WTC11 (cell line): ENCODE measurements at regions of chr20 and their contacts with region 1.

Region 1: DNA sequence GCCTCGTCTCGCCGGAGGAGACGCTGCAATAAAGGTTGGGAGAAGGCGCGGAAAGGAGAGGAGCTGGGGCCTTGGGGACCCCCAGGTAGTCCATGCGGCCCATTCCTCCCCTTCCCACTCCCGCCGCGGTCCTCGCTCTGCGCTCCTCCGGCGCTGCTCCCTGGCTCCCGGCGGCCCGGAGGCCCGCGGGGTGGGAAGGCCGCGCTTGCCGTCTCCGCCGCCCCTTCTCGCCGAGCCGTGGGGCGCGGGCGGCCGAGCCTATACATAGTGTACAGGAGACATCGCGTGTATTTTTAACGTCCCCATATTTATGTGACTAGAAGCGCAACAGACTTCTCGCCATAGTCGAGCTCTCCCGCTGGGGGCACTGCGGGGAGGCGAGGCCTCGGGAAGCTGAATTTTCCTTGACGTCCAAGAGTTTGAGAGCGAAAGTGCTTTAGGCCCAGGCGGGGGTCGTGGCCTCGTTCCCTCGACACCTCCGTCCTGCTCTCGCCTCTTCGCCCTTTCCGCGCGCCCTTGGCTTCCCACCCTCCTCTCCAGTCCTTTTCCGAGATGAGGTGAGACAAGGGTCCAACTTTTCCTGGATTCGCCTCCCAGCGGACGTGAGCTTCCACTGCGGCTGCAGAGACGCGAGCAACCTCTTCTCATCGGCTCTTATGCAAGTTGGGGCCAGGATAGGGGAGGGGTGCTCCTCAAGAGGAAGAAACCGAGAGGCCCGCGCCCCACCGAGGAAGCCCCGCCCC is 29.0 kb downstream of the SLC12A5 start:
- DNase-seq: peak; percentile 79
- ATAC-seq: peak; percentile 68
- H3K4me3 Mint-ChIP-seq: peak overlapping the region; percentile 71
- H3K27ac Mint-ChIP-seq: no peak overlapping the region
- H3K4me1 Mint-ChIP-seq: peaks cover 30% of the 10 kb centered on the region
- H3K27me3 Mint-ChIP-seq: peaks cover 68% of the 10 kb centered on the region
- CTCF ChIP-seq: no peak

Region 2: DNA sequence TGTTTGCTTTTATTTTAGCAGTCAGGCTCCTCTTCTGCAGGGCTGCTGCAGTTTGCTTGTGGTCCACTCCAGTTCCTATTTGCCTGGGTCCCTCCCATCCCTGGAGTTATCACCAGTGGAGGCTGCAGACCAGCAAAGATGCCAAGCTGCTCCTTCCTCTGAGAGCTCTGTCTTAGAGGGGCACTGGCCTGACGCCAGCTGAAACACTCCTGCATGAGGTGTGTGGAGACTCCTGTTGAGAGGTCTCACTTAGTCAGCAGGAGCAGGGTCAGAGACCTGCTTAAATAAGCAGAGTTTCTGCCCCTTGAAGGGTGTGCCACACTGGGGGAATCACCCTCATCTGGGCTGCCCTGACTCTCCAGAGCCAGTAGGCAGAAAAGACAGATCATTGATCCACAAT is 462.8 kb before region 1 on chr20:
- CTCF ChIA-PET with region 1: no interaction called
- POLR2A ChIA-PET with region 1: no interaction called
- DNase-seq: no peak
- ATAC-seq: no peak
- H3K4me3 Mint-ChIP-seq: no peak overlapping the region
- H3K27ac Mint-ChIP-seq: no peak overlapping the region
- H3K4me1 Mint-ChIP-seq: peaks cover 6% of the 10 kb centered on the region
- H3K27me3 Mint-ChIP-seq: no peaks in the 10 kb centered on the region; the same call in 1 of the 2 replicates
- CTCF ChIP-seq: no peak

Region 3: DNA sequence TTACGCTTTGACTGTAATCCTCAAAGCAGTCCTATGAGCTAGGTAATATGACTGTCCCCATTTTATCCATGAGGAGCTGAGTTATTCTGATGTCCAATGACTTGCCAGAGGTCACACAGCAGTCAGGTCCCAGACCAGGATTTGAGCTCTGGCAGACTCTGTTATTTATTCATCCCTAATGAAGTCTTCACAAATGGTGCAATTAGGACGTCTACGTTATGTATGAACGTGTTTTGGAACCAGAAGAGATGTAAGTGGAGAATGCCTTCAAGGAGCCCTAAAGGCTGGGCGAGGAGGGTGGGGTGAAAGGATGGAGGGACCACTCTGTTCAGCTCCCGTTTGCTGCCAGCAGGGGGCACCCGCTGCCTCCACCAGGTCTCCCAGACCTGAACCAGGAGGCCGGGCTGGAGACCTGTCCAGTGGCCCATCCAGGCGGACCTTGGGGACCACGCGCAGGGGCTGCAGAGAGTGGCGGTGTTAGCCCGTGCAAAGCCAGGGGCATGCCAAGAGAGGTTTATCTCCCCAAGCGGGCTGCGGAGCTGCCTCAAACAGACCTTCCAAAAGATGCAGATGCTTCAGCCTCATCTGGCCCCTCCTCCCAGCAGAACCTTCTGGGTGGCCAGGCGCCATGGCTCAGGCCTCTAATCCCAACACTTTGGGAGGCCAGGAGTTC is 70.8 kb before region 1 on chr20:
- CTCF ChIA-PET with region 1: interaction called, 29 read pairs
- POLR2A ChIA-PET with region 1: no interaction called
- DNase-seq: peak; percentile 93
- ATAC-seq: peak; percentile 91
- H3K4me3 Mint-ChIP-seq: no peak overlapping the region
- H3K27ac Mint-ChIP-seq: no peak overlapping the region
- H3K4me1 Mint-ChIP-seq: peaks cover 14% of the 10 kb centered on the region
- H3K27me3 Mint-ChIP-seq: peaks cover 6% of the 10 kb centered on the region
- CTCF ChIP-seq: peak; percentile 93

Region 4: GRCh38 chr20:46022411-46023147 is 35.4 kb before region 1 on chr20:
- CTCF ChIA-PET with region 1: interaction called, 108 read pairs
- POLR2A ChIA-PET with region 1: no interaction called
- DNase-seq: peak; percentile 87
- ATAC-seq: peak; percentile 7; the same call in 1 of the 2 replicates
- H3K4me3 Mint-ChIP-seq: peak overlapping the region; percentile 76
- H3K27ac Mint-ChIP-seq: peak overlapping the region; percentile 28; the same call in 1 of the 2 replicates
- H3K4me1 Mint-ChIP-seq: peaks cover 7% of the 10 kb centered on the region
- H3K27me3 Mint-ChIP-seq: peaks cover 50% of the 10 kb centered on the region
- CTCF ChIP-seq: peak; percentile 79

Region 5: DNA sequence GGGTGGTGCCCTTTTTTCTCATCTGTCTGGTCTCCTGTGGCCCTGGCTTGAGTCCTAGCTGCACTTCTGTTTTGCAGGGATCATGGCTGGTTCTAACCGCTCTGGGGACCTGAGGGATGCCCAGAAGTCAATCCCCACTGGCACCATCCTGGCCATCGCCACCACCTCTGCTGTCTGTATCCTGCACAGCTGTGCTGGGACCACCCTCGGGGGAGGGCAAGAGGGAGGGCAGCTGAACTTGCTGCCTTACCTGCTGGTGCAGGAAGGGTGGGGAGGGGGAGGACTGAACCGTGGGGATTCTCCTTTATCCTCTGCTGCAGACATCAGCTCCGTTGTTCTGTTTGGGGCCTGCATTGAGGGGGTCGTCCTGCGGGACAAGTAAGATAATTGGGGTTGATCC is 14.5 kb before region 1 on chr20:
- CTCF ChIA-PET with region 1: interaction called, 12 read pairs
- POLR2A ChIA-PET with region 1: interaction called, 3 read pairs
- DNase-seq: no peak
- ATAC-seq: no peak
- H3K4me3 Mint-ChIP-seq: no peak overlapping the region
- H3K27ac Mint-ChIP-seq: no peak overlapping the region
- H3K4me1 Mint-ChIP-seq: no peaks in the 10 kb centered on the region
- H3K27me3 Mint-ChIP-seq: peaks cover 34% of the 10 kb centered on the region
- CTCF ChIP-seq: no peak

Region 6: DNA sequence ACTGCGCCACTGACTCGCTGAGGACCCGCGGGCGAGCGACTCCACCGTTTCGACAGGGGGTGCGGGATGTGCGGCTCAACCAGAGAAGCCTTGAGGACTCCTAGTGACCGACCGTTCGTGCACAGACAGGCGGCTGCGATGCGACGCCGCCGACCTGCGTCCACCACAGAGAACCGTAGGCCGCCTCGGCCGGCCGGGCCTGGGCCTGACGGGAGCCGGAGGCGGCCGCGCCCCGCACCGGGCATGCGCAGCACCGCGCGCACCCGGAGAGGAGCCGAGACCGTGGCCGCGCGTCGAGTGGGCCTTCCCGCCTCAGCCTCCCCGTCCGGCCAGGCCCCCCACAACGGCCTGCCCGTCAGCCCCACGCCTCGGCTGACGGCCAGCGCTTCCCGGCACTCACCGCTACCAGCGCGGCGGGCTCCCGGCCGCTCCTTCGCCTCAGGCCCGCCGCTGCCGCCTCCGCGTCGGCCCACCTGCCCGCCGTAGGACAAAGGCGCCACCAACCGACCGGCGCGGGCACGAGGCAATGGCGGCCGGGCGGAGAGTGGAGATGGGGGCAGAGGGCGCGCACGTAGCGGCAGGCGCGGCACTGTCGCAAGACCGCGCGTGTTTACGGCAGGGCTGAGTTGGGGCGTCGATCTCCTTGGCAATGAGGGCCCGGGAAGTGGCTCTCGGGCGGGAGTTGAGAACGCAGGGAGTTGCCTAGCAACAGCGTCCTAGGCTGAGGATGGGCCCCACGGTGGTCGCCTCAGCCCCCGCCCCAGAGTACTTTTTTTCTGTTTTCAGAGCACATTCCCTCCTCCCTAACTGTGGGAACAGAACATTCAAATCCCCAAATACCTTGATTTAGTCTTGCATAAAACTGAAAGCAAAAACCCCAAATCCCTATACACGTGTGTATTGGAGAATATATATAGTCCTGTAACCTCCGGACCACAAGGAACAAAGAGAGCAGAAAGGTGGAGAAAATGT is 31.7 kb after region 1 on chr20 and contains the start of gene NCOA5:
- CTCF ChIA-PET with region 1: interaction called, 17 read pairs
- POLR2A ChIA-PET with region 1: no interaction called
- DNase-seq: peak; percentile 96
- ATAC-seq: peak; percentile 84
- H3K4me3 Mint-ChIP-seq: peak within 1 kb of the TSS; percentile 89
- H3K27ac Mint-ChIP-seq: peak within 1 kb of the TSS; percentile 89
- H3K4me1 Mint-ChIP-seq: peaks cover 37% of the 10 kb centered on the region
- H3K27me3 Mint-ChIP-seq: no peaks in the 10 kb centered on the region
- CTCF ChIP-seq: no peak
- total RNA-seq, gene NCOA5: 16.5 to 20.5 TPM (median 16.5 TPM) in 3 replicates

Region 7: DNA sequence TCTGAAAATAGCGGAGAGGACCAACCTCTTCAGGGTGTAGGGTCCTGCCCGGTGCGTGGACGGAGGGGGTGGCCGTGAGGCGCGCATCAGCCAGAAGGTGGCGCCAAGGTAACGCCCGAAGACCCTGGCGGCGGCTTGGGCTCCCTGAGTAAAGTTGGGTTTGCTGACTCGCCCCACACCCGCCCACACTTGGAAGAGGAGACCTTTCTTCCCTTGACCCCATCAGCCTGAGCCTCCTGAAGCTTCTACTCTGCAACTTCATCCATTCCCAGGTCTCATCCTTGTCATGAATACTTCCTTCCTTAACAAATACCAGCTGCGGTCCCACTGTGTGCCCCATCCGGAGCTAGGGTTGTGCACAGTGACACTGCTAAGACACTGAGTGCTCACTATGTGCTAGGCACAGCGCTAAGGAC is 74.7 kb after region 1 on chr20:
- CTCF ChIA-PET with region 1: interaction called, 17 read pairs
- POLR2A ChIA-PET with region 1: no interaction called
- DNase-seq: peak; percentile 86
- ATAC-seq: peak; percentile 83
- H3K4me3 Mint-ChIP-seq: no peak overlapping the region
- H3K27ac Mint-ChIP-seq: no peak overlapping the region
- H3K4me1 Mint-ChIP-seq: peaks cover 17% of the 10 kb centered on the region
- H3K27me3 Mint-ChIP-seq: peaks cover 17% of the 10 kb centered on the region
- CTCF ChIP-seq: peak; percentile 78

Region 8: DNA sequence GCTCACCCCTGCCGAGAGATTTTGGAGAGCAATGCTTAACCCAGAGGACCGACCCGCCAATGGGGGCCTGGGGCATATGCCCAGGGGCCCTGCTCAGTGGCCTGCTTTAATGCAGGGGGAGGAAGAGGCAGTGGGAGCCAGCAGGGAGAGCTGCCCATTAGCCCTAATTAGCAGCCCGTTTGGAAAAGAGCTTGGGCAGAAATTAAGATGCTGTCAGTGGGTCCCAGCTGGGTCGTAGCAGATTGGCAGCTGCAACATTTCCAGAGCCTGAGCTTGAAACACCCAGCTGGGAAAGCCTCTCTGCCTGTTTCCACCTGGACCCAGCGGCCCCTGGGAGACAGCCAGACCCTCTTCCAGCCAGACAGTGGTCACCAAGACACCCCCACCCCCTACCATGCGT is 99.6 kb after region 1 on chr20:
- CTCF ChIA-PET with region 1: no interaction called
- POLR2A ChIA-PET with region 1: no interaction called
- DNase-seq: no peak
- ATAC-seq: no peak
- H3K4me3 Mint-ChIP-seq: no peak overlapping the region
- H3K27ac Mint-ChIP-seq: no peak overlapping the region
- H3K4me1 Mint-ChIP-seq: no peaks in the 10 kb centered on the region
- H3K27me3 Mint-ChIP-seq: peaks cover 3% of the 10 kb centered on the region; the same call in 1 of the 2 replicates
- CTCF ChIP-seq: no peak